Motor neuron (in vitro differentiated cells): ENCODE measurements at regions of chr11 and their contacts with region 1.

Region 1: GRCh38 chr11:108664730-108665525 is at the start of gene DDX10:
- ATAC-seq: peak; percentile 94 to 98 (median 96)
- H3K4me3 ChIP-seq: peak within 1 kb of the TSS; percentile 57 to 74 (median 60)
- H3K27ac ChIP-seq: peak within 1 kb of the TSS in 1 of 2 donors; percentile 38
- H3K4me1 ChIP-seq: peaks cover 6 to 8% of the 10 kb centered on the region in 2 donors
- total RNA-seq, gene DDX10: 16.0 to 67.6 (median 21.6) TPM

Region 2: DNA sequence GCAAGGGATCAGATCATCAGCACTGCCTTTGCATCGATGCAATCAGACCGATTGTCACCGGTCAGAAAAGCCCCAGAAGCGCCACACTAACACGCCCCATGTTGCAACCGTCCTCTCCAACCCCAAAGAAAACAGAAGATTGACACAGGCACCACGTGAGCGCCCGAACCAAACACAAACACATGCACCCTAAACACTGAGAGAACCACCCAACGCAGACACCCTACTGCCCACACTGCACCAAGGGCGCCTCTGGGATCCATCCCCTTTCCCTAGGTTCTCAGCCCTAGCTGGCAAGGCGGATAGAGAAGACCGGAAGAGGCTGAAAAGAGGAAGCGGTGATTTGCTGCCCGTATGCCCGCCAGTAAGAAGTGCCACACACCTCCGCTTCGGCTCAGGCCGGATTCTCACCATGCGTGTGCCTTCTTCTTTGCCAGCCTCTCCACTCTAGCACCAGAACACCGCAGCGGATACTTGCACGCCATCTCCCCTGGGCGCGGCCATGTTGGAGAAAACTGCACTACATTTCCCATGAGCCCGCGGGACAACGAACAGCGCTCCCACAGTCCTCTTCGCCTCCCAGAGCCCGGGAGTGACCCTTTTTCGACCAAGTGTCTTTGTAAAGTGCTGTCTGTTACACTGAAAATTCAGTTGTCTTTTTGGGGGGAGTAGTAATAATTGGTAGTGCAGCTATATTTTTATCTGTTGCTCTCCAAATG is 1099.5 kb before region 1 on chr11 and contains the start of gene ALKBH8:
- in situ Hi-C with region 1: loop called in 1 of 9 experiments (anchors 25 kb)
- ATAC-seq: peak; percentile 89 to 95 (median 94)
- H3K4me3 ChIP-seq: peak within 1 kb of the TSS; percentile 83 to 98 (median 95)
- H3K27ac ChIP-seq: peak within 1 kb of the TSS; percentile 73 to 79
- H3K4me1 ChIP-seq: peaks cover 14 to 21% of the 10 kb centered on the region in 2 donors
- total RNA-seq, gene ALKBH8: 7.2 to 12.1 (median 9.4) TPM

Region 3: GRCh38 chr11:107916671-107917241 is 748.2 kb before region 1 on chr11:
- in situ Hi-C with region 1: no loop called
- ATAC-seq: peak in 2 of 8 experiments; percentile 20 to 53
- H3K4me3 ChIP-seq: no peak overlapping the region
- H3K27ac ChIP-seq: no peak overlapping the region
- H3K4me1 ChIP-seq: no peaks in the 10 kb centered on the region

Region 4: DNA sequence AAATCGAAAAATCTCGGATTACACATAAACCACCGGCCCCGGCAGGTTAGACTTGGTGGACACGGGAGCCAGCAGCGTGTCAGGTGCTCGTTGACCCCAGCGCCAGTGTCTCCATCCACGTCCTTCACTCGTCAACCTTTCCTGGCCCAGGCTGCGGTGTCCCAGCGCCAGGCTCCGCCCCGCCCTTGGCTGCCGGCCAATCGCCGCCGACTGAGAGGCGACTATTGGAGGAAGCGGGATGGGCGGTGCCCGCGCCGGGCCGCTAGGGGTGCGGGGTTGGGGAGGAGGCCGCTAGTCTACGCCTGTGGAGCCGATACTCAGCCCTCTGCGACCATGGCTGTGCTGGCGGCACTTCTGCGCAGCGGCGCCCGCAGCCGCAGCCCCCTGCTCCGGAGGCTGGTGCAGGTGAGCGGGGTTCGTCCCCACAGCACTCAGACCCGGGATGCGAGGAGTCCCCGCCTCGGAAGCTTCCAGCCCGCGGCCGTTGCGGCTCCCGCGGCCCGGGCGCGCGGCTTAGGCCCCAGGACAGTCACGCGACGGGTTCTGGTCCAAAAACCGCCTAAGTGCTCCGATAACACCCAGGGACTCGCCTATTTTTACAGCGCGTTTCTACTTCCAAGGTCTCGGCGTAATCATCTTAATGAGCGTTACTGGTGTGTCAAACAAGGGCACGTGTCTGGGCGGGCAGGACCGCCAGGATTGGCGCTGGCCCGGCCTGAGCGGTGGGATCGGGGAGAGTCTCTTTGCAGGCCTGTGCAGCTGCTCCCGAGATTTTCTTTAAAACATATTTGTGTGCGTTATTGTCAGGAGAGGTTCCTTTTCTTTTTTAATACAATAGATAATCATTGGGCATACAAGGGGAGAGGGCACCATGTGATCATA is 543.4 kb before region 1 on chr11 and contains the start of gene ACAT1:
- in situ Hi-C with region 1: loop called in 1 of 9 experiments (anchors 25 kb)
- ATAC-seq: peak; percentile 90 to 98 (median 97)
- H3K4me3 ChIP-seq: peak within 1 kb of the TSS; percentile 56 to 67 (median 61)
- H3K27ac ChIP-seq: peak within 1 kb of the TSS; percentile 77 to 91
- H3K4me1 ChIP-seq: peaks cover 8 to 11% of the 10 kb centered on the region in 2 donors
- total RNA-seq, gene ACAT1: 35.0 to 107 (median 51.3) TPM

Region 5: GRCh38 chr11:108340970-108341369 is 324.0 kb before region 1 on chr11:
- in situ Hi-C with region 1: loop called in 1 of 9 experiments (anchors 25 kb)
- ATAC-seq: peak in 1 of 8 experiments; percentile 64
- H3K4me3 ChIP-seq: no peak overlapping the region
- H3K27ac ChIP-seq: no peak overlapping the region
- H3K4me1 ChIP-seq: peaks cover 0 to 8% of the 10 kb centered on the region in 2 donors

Region 6: DNA sequence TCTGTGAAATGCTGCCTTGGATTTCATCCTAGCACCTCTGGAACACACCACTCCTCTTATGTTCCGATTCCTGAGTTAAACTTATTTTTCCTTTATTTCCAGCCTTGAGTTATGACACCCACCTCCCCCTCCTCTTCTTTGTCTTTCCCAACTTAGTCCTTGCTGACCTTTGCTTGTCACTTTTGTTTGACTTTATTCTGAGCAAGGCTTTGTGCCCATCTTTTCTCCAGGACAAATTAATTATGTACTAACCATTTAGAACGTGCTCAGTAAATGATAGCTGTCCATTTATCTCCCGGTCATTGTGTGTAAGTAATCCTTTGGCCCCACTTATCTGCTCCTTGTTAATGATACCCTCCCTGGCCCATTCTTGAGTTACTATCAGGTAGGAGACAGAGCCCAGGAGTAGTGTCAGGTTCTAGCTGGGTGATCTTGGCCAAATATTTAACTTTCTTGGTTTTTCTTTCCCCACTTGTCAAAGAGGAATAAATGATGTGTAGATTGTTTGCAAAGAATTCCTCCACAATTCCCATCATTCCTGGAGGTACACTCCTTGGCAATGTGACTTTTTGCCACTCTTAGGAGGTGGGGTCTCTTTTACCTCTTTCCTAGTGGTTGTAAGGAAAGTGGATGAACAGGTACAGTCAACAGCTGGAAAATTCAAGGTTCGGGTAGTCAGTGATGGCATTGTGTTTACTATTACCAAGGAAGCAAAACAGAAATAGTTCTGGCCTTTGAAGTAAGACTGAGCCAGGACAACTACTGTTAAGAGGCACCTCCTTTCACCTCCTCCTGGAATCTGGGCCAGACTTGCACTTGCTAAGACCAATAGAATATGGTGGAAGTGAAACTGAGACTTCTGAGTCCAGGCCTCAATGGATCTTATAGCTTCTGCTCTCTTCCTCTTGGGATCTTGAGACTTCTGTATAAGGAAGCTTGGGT is 115.3 kb before region 1 on chr11:
- in situ Hi-C with region 1: no loop called
- ATAC-seq: no peak
- H3K4me3 ChIP-seq: no peak overlapping the region
- H3K27ac ChIP-seq: no peak overlapping the region
- H3K4me1 ChIP-seq: no peaks in the 10 kb centered on the region

Region 7: DNA sequence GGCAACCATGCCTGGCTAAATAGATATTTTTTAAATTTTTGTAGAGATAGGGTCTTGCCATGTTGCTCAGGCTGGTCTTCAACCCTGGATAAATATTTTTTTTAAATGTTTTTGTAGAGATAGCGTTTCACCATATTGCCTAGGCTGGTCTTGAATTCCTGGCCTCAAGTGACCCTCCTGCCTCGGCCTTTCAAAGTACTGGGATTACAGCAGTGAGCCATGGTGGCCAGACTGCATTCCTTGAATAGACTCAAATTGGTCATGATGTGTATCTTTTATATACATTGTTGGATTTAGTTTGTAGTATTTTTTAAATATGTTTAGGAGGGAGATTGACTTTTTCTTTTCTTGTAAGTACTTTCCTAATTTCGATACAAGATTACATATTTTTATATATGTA is 431.3 kb after region 1 on chr11:
- in situ Hi-C with region 1: no loop called
- ATAC-seq: no peak
- H3K4me3 ChIP-seq: no peak overlapping the region
- H3K27ac ChIP-seq: no peak overlapping the region
- H3K4me1 ChIP-seq: peaks cover 0 to 7% of the 10 kb centered on the region in 2 donors